ENCODE measurements at regions of chr16 and their contacts with region 1.

Region 1: GRCh38 chr16:67546761-67547422 is 15.4 kb upstream of the CTCF start:
- DNase-seq: peak; percentile 85
- ATAC-seq: peak; percentile 77

Region 2: DNA sequence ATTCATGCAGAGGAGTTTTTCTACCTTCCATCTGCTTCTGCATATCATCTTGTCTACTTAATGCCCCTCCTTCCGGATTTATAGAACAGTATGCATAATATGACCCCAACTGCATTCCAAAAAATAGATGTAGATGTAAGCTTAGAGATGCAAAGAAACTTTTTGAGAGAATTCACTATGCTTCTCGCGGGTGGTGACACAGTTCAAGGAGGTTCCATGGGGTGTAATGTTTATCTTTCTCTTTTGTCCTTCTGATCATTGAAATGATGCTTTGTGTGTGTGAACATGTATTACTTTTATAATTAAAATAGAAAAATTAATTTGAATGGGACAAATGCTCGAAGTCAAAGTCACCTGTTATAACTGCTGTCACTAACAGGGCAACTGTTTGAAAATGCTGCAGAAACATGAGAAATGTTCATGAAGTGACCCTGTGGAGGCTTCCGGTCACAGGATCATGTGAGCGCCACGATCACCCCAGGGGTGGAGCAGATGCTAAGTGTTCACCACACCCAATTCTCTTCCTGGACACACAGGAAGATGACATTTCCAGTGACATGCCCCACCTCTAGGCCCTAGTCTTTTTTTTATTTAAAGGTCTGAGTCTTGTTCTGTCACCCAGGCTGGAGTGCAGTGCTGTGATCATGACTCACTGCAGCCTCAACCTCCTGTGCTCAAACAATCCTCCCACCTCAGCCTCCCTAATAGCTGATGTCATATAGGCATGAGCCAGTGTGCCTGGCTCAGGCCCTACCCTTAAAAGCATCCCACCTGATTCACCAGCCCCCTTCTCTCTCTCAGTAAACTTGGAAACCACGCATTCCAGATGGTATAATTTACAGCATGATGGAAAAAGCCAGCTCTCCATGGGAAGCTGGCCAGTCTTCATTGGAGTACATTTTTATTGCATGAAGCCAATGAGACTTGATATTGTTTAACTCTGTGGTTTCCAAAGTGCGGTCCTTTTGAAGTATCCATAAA is 42.6 kb before region 1 on chr16:
- intact Hi-C with region 1: no loop called
- DNase-seq: peak; percentile 75
- ATAC-seq: peak; percentile 89

Region 3: GRCh38 chr16:67641779-67642708 is 95.2 kb after region 1 on chr16:
- intact Hi-C with region 1: loop called (anchors 10 kb)
- DNase-seq: peak; percentile 81
- ATAC-seq: peak; percentile 91